ENCODE measurements at regions of chr12 and their contacts with region 1.

Region 1: GRCh38 chr12:31238764-31239387 is 87.1 kb downstream of the SINHCAF start:
- DNase-seq: peak; percentile 47 to 80 (median 68)
- ATAC-seq: peak; percentile 68 to 86 (median 84)
- H3K4me3 ChIP-seq: no peak overlapping the region
- H3K27ac ChIP-seq: no peak overlapping the region
- H3K4me1 ChIP-seq: peaks cover 0 to 3% (median 0%) of the 10 kb centered on the region in 3 donors
- H3K27me3 ChIP-seq: no peaks in the 10 kb centered on the region
- CTCF ChIP-seq: peak; percentile 38 to 67 (median 55)

Region 2: GRCh38 chr12:31117203-31118011 is 121.5 kb before region 1 on chr12:
- intact Hi-C with region 1: loop called in 1 of 3 experiments (anchors 5 kb)
- DNase-seq: peak in 3 of 6 donors; percentile 52 to 75 (median 56)
- ATAC-seq: peak; percentile 77 to 95 (median 79)
- H3K4me3 ChIP-seq: peak overlapping the region in 2 of 4 donors; percentile 18 to 33
- H3K27ac ChIP-seq: no peak overlapping the region
- H3K4me1 ChIP-seq: no peaks in the 10 kb centered on the region
- H3K27me3 ChIP-seq: peaks cover 0 to 7% (median 0%) of the 10 kb centered on the region in 4 donors
- CTCF ChIP-seq: peak; percentile 31 to 61 (median 42)